ENCODE measurements at regions of chr11 and their contacts with region 1.

Region 1: GRCh38 chr11:78139422-78140391 is at the start of gene ALG8:
- DNase-seq: peak; percentile 99
- H3K4me3 ChIP-seq: peak within 1 kb of the TSS; percentile 64
- H3K27ac ChIP-seq: peak within 1 kb of the TSS; percentile 77
- H3K4me1 ChIP-seq: no peaks in the 10 kb centered on the region
- H3K27me3 ChIP-seq: no peaks in the 10 kb centered on the region
- CTCF ChIP-seq: no peak
- total RNA-seq, gene ALG8: 112 and 131 TPM in 2 replicates

Region 2: DNA sequence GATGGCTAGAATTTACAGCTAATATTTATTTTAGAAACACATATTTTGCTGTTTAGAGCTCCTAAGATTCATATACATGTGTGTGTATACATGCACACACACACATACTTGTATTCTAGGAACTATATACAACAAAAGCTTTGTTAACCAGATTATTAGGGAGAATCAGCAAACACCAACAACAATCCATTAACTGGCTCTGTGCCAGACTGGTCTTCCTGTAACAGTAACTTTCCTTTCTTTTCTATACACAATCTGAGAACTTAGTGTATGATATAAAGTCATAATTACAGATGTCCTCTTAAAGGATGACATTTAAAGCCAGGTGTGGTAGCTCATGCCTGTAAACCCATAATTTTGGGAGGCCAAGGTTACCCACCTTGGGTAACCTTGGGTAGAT is 452.6 kb before region 1 on chr11:
- CTCF ChIA-PET with region 1: no interaction called
- POLR2A ChIA-PET with region 1: no interaction called
- intact Hi-C with region 1: no loop called
- DNase-seq: no peak
- H3K4me3 ChIP-seq: no peak overlapping the region
- H3K27ac ChIP-seq: no peak overlapping the region
- H3K4me1 ChIP-seq: no peaks in the 10 kb centered on the region
- H3K27me3 ChIP-seq: no peaks in the 10 kb centered on the region
- CTCF ChIP-seq: no peak

Region 3: GRCh38 chr11:78079232-78080083 is 60.2 kb before region 1 on chr11 and contains the start of gene NDUFC2:
- CTCF ChIA-PET with region 1: no interaction called
- POLR2A ChIA-PET with region 1: no interaction called
- intact Hi-C with region 1: loop called (anchors 5 kb)
- DNase-seq: peak; percentile 91
- H3K4me3 ChIP-seq: peak within 1 kb of the TSS; percentile 81
- H3K27ac ChIP-seq: peak within 1 kb of the TSS; percentile 88
- H3K4me1 ChIP-seq: no peaks in the 10 kb centered on the region
- H3K27me3 ChIP-seq: no peaks in the 10 kb centered on the region
- CTCF ChIP-seq: no peak
- total RNA-seq, gene NDUFC2: 408 and 425 TPM in 2 replicates

Region 4: GRCh38 chr11:78161962-78162371 is 22.3 kb after region 1 on chr11:
- CTCF ChIA-PET with region 1: no interaction called
- POLR2A ChIA-PET with region 1: no interaction called
- intact Hi-C with region 1: no loop called
- DNase-seq: no peak
- H3K4me3 ChIP-seq: no peak overlapping the region
- H3K27ac ChIP-seq: no peak overlapping the region
- H3K4me1 ChIP-seq: no peaks in the 10 kb centered on the region
- H3K27me3 ChIP-seq: no peaks in the 10 kb centered on the region
- CTCF ChIP-seq: no peak

Measured in A673 (cell line).